ENCODE measurements at regions of chr3 and their contacts with region 1.

Region 1: DNA sequence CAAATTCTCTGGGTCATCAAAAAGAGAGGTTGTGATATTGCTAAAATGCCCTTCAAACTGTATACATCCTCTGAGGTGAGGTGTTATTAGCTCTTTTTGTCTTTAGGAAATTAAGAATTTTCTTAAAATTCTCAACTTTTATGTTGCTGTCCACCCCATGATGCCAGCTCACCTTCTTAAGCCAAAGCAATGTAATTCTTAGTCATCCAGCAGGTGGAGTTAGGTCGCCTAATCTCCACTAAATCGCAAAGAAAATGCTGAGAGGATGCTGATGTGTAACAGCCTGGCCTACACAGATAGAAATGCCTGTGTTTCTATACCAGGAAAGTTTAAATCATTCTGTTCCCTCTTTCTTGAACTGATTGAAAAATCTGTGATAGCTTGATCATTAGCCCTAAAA is 770.2 kb upstream of the ALCAM start:
- DNase-seq: no peak
- ATAC-seq: peak; percentile 90
- H3K4me3 Mint-ChIP-seq: no peak overlapping the region
- H3K27ac Mint-ChIP-seq: no peak overlapping the region
- H3K4me1 Mint-ChIP-seq: peaks cover 4% of the 10 kb centered on the region; the same call in 1 of the 2 replicates
- H3K27me3 Mint-ChIP-seq: no peaks in the 10 kb centered on the region
- CTCF ChIP-seq: peak; percentile 32; the same call in 1 of the 2 replicates

Region 2: GRCh38 chr3:104687362-104687761 is 90.8 kb after region 1 on chr3:
- CTCF ChIA-PET with region 1: no interaction called
- POLR2A ChIA-PET with region 1: no interaction called
- DNase-seq: no peak
- ATAC-seq: no peak
- H3K4me3 Mint-ChIP-seq: no peak overlapping the region
- H3K27ac Mint-ChIP-seq: no peak overlapping the region
- H3K4me1 Mint-ChIP-seq: peaks cover 4% of the 10 kb centered on the region
- H3K27me3 Mint-ChIP-seq: no peaks in the 10 kb centered on the region
- CTCF ChIP-seq: no peak

Region 3: DNA sequence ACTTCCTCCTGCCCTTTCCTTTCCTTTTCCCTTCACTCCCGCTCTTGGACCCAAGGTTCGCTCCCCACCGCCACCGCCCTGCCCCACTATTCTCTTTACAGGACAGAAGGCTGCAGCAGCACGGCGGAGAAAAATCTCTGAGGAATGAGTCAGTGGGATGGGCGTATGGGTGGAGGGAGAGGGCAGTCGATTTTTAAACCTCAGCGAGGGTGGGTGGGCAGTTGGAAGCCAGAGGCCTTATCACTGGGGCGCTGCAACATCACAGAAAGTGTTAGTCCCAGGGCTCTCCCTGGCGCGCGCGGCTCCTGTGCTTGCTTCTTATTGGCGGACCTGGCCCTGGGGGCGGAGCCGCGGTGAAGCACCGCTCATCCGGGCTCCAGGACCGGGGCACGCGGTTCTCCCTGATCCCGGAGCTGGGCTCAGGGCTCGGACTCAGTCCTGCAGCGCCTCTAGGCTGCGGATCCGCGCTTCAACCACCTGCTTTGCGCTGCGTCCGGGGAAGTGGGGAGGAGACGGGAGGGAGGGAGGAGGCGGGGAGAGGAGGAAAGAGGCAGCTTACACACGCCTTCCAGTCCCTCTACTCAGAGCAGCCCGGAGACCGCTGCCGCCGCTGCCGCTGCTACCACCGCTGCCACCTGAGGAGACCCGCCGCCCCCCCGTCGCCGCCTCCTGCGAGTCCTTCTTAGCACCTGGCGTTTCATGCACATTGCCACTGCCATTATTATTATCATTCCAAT is 769.9 kb after region 1 on chr3 and contains the start of gene ALCAM:
- CTCF ChIA-PET with region 1: interaction called, 11 read pairs
- POLR2A ChIA-PET with region 1: no interaction called
- DNase-seq: peak; percentile 96
- ATAC-seq: peak; percentile 86
- H3K4me3 Mint-ChIP-seq: peak within 1 kb of the TSS; percentile 81
- H3K27ac Mint-ChIP-seq: peak within 1 kb of the TSS; percentile 90
- H3K4me1 Mint-ChIP-seq: peaks cover 32% of the 10 kb centered on the region
- H3K27me3 Mint-ChIP-seq: peaks cover 22% of the 10 kb centered on the region
- CTCF ChIP-seq: no peak
- total RNA-seq, gene ALCAM: 24.0 to 30.7 TPM (median 25.0 TPM) in 3 replicates

Measured in WTC11 (cell line).